Ascending aorta (tissue), 2 donors: ENCODE measurements at regions of chr12 and their contacts with region 1.

Region 1: DNA sequence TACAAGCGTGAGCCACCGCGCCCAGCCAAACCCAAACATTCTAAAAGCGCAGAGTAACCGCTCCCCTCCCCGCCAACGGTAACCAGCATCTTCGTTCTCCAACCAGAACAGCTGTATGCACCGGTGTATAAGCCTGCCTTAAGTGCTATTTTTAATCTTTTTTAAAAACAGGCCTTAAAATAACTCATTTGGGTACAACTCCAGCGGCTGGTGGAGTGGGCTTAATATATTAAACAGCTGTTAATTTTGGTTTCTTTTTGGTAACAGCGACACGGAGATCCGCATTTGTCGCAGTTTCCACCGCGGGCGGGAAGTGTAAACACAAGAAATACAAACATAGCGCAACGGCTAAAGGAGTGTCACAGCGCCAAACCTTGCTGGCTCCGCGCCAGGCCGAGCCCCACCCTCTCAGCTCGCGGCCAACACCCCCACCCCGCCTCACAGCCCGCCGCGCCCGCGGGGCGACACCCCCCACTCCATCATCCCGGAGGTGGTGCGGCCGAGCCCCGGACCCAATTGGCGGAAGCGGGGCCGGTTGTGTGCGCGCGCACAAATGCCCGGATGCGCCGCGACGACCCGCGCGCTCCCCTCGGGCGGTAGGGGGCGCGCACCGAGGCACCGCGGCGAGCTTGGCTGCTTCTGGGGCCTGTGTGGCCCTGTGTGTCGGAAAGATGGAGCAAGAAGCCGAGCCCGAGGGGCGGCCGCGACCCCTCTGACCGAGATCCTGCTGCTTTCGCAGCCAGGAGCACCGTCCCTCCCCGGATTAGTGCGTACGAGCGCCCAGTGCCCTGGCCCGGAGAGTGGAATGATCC is at the start of gene MDM2:
- DNase-seq: peak; percentile 85 to 97
- H3K4me3 ChIP-seq: peak within 1 kb of the TSS; percentile 81 to 93
- H3K27ac ChIP-seq: peak within 1 kb of the TSS; percentile 98 to 99
- H3K4me1 ChIP-seq: peaks cover 0 to 14% of the 10 kb centered on the region in 2 donors
- H3K27me3 ChIP-seq: no peaks in the 10 kb centered on the region
- CTCF ChIP-seq: peak; percentile 80 to 85 (median 82)
- total RNA-seq, gene MDM2: 24.2 TPM

Region 2: DNA sequence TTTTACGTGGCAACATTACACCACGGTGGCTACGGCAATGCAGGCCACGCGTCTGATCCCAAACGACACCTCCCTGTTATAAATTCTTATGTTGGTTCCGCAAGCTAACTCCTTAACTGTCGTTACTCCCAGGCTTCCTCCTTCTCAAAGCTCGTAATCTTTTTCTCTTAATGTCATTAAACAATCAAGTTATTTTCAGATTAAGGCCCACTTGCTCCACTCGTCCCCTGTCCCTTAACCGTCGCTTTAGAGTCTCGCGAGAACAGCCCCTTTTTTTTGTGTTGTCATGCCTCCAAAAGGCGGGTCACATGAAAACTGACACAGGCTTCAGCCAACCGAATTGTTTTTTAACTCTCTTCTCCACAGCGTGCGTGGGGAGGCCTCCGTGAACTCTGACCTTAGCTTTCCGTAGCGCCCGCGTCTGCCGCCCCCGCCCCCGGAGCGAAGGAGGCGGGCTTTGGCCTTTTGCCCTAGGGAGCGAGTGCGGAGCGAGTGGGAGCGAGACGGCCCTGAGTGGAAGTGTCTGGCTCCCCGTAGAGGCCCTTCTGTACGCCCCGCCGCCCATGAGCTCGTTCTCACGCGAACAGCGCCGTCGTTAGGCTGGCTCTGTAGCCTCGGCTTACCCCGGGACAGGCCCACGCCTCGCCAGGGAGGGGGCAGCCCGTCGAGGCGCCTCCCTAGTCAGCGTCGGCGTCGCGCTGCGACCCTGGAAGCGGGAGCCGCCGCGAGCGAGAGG is 1538.7 kb before region 1 on chr12 and contains the start of gene CAND1:
- intact Hi-C with region 1: loop called (anchors 10 kb)
- DNase-seq: peak; percentile 90 to 99
- H3K4me3 ChIP-seq: peak within 1 kb of the TSS; percentile 78 to 96
- H3K27ac ChIP-seq: peak within 1 kb of the TSS; percentile 93 to 99
- H3K4me1 ChIP-seq: peaks cover 0 to 30% of the 10 kb centered on the region in 2 donors
- H3K27me3 ChIP-seq: no peaks in the 10 kb centered on the region
- CTCF ChIP-seq: no peak
- total RNA-seq, gene CAND1: 31.6 TPM

Region 3: DNA sequence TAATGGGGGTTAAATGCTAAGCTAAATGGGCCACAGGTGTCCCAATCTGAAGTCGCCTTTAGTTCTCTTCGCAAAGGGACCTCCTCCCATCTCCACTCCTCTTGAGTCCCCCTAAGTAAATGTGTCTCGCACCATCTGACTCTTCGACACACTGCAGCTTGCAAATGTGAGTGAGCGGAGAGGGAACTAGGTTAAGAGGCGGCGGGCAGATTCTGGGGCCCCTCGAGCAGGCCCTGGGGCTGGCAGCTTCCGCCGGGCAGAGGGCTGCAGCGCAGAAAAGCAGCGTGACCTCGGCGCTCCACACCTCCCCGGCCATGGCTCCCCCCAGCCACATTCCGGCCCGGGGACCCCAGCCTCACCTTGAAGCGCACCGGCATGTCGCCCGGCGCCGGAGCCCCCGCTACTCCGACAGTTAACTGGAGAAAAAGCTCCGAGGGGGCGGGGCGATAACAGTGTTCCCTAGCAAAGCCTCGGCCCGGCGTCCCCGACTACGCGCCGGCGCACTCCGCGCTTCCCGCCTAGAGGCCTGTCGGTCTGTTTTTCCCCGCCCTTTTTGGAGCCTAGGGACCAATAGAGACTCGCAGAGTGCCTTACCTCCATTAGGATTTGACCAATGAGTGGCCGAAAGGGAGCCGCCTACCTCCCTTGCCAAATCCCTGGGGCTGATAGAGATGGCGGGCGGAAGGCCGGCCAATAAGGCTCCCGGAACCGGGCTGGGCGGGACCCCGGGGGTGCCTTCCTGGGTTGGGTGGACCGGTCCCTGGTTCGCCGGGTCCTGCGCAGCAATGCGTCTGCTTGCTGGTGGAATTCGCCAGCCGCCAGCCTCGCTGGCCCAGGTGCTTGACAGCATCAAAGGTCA is 475.7 kb before region 1 on chr12 and contains the start of gene MDM1:
- intact Hi-C with region 1: loop called (anchors 1 kb)
- DNase-seq: peak; percentile 94 to 99
- H3K4me3 ChIP-seq: peak within 1 kb of the TSS; percentile 77 to 88
- H3K27ac ChIP-seq: peak within 1 kb of the TSS; percentile 58 to 66
- H3K4me1 ChIP-seq: peaks cover 0 to 8% of the 10 kb centered on the region in 2 donors
- H3K27me3 ChIP-seq: no peaks in the 10 kb centered on the region
- CTCF ChIP-seq: no peak
- total RNA-seq, gene MDM1: 9.5 TPM

Region 4: DNA sequence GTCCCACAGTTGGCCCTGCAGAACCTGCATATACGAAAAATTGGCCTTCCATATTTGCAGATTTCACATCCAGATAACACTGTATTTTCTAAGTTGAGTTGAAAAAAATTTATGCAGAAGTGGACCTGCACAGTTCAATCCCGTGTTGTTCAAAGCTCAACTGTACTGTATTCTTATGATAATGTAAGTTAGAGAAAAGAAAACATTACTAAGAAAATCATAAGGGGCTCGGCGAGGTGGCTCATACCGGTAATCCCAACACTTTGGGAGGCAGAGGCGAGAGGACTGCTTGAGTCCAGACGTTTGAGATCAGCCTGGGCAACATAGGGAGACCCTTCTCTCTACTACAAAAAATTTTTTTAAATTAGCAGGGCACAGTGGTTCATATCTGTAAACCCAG is 80.0 kb before region 1 on chr12:
- intact Hi-C with region 1: no loop called
- DNase-seq: no peak
- H3K4me3 ChIP-seq: no peak overlapping the region
- H3K27ac ChIP-seq: no peak overlapping the region
- H3K4me1 ChIP-seq: no peaks in the 10 kb centered on the region
- H3K27me3 ChIP-seq: no peaks in the 10 kb centered on the region
- CTCF ChIP-seq: no peak

Region 5: GRCh38 chr12:68745904-68746571 is 61.7 kb before region 1 on chr12 and contains the start of gene SLC35E3:
- intact Hi-C with region 1: loop called (anchors 1 kb)
- DNase-seq: peak; percentile 68 to 94
- H3K4me3 ChIP-seq: peak within 1 kb of the TSS; percentile 66 to 85
- H3K27ac ChIP-seq: peak within 1 kb of the TSS; percentile 72 to 75
- H3K4me1 ChIP-seq: peaks cover 0 to 7% of the 10 kb centered on the region in 2 donors
- H3K27me3 ChIP-seq: no peaks in the 10 kb centered on the region
- CTCF ChIP-seq: no peak
- total RNA-seq, gene SLC35E3: 2.0 TPM

Region 6: DNA sequence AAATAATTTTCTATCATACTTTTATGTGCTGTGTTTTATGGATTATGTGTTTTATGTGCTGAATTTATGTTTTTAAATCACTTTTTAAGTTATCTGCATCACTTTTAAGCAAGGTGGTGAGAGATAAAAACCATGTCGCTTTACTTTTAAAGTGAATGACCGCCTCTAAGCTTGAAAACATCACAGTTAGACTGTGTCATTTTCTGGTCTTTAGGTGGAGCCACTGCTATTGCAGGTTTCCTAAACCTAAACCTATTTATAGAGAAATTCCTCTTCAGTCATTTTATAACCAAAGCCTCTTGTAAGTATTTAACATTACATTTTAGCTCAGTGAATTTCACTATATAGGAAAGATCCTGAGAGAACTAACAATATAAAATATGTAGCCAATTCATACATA is 20.9 kb before region 1 on chr12:
- intact Hi-C with region 1: loop called (anchors 2 kb)
- DNase-seq: no peak
- H3K4me3 ChIP-seq: no peak overlapping the region
- H3K27ac ChIP-seq: peak overlapping the region; percentile 31 to 39
- H3K4me1 ChIP-seq: peaks cover 0 to 2% of the 10 kb centered on the region in 2 donors
- H3K27me3 ChIP-seq: no peaks in the 10 kb centered on the region
- CTCF ChIP-seq: peak in 1 of 3 experiments; percentile 5